Cardiac septum (tissue), 1 donor: ENCODE measurements at regions of chr15 and their contacts with region 1.

Region 1: GRCh38 chr15:69576035-69576526 is 123.5 kb downstream of the RPLP1 start:
- DNase-seq: peak; percentile 87

Region 2: DNA sequence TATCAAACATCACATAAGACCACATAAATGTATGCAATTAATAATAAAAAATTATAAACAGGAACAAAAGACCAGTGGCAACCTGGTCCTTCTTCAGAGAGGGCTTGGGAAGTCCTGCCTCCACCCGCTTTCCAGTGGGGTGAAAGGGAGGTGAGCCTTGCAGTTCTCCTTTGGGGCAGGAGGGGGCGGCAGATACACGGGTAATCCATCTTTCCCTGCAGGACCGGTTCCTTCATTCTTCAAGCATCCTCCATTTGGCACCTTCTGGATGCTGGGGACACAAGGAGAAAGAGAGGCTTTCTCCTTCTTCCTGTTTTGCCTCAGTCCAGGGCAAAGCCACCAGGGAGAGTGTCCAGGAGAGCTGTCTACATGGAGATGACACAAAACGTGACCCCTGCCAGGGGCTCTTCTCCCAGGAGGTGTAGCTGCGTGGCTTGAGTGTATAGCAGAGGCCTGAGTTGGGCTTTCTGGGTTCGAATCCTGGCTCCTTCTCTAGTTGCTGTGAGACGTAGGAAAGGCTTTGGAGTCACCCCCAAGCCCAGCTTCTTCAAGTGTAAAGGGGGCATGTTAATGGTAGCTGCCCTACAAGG is 100.2 kb before region 1 on chr15:
- intact Hi-C with region 1: loop called (anchors 5 kb)
- DNase-seq: peak; percentile 89

Region 3: GRCh38 chr15:70091726-70092463 is 515.8 kb after region 1 on chr15:
- intact Hi-C with region 1: loop called (anchors 5 kb)
- DNase-seq: peak; percentile 27

Region 4: DNA sequence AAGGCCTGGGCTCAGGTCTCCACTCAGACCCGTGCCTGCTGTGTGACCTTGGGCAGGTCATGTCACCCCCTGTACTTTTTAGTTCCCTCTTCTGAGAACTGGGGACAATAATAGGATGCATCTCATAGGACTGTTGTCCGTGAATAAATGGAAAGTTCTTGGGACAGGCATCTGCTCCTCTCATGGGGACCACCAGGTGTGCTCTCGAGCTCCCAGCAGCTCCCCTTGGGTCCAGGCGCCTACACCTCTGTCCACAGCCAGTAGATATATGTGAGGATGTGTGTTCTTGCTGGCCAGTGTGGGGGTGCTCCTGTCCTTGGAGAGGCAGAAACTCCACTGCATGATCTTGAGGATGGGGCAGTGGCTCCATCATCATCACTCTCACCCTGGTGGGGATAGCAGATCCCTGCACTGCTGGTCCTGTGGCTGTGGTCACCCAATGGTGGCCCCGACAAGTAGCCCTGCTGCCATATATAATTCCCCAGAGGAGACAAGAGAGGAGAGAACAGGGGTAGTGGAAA is 779.3 kb after region 1 on chr15:
- intact Hi-C with region 1: loop called (anchors 10 kb)
- DNase-seq: peak; percentile 27

Region 5: DNA sequence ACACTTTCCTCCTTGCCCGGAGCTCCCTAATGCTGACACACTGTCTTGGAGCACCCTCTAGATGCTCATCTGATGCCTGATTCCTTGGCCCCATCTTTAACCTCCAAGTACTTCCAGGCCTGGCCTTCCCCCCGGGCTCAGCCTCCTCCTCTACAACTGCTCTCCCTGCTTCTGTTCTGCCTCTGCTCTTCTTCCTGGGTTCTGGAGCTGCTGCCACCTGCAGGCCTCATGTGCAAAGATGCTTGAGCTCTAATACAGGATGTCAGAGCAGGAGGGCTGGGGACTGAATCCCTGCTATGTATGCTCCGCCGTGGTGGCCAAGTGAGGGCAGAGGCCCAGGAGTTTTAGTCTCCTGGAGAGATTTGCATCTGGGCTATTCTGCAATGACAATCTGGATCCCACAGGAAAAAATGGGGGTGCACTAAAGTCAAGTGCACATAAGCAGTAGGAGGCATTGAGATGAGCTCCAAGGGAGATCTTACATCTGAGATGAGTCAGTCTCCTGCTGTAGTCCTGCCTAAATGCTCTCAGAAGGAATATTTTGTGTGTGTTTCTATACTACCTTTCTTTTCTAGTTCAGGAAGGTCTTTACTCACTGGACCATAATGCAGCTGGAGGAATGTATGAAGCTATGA is 890.9 kb after region 1 on chr15:
- intact Hi-C with region 1: loop called (anchors 10 kb)
- DNase-seq: no peak